ENCODE measurements at regions of chr19 and their contacts with region 1.

Region 1: GRCh38 chr19:19538061-19538784 is at the start of gene CILP2:
- DNase-seq: peak; percentile 37 to 83
- H3K4me3 ChIP-seq: peak within 1 kb of the TSS; percentile 30 to 43 (median 34)
- H3K27ac ChIP-seq: no peak within 1 kb of the TSS
- H3K4me1 ChIP-seq: peaks cover 24 to 47% (median 42%) of the 10 kb centered on the region in 4 donors
- H3K27me3 ChIP-seq: peaks cover 16 to 75% (median 54%) of the 10 kb centered on the region in 3 donors
- CTCF ChIP-seq: no peak
- EP300 ChIP-seq: no peak
- POLR2A ChIP-seq: no peak
- total RNA-seq, gene CILP2: under 0.01 to 1.4 (median 0.73) TPM in 3 of 5 donors, not detected in the others

Region 2: GRCh38 chr19:19643158-19644053 is 105.2 kb after region 1 on chr19 and contains the start of gene GMIP:
- intact Hi-C with region 1: loop called (anchors 5 kb)
- DNase-seq: peak; percentile 88 to 94
- H3K4me3 ChIP-seq: peak within 1 kb of the TSS; percentile 63 to 87 (median 80)
- H3K27ac ChIP-seq: peak within 1 kb of the TSS; percentile 73 to 91 (median 86)
- H3K4me1 ChIP-seq: peaks cover 8 to 24% (median 20%) of the 10 kb centered on the region in 4 donors
- H3K27me3 ChIP-seq: no peaks in the 10 kb centered on the region
- CTCF ChIP-seq: peak in 4 of 7 experiments; percentile 72 to 93 (median 86)
- EP300 ChIP-seq: no peak
- POLR2A ChIP-seq: no peak
- total RNA-seq, gene GMIP: 5.3 to 96.2 (median 35.0) TPM

Region 3: DNA sequence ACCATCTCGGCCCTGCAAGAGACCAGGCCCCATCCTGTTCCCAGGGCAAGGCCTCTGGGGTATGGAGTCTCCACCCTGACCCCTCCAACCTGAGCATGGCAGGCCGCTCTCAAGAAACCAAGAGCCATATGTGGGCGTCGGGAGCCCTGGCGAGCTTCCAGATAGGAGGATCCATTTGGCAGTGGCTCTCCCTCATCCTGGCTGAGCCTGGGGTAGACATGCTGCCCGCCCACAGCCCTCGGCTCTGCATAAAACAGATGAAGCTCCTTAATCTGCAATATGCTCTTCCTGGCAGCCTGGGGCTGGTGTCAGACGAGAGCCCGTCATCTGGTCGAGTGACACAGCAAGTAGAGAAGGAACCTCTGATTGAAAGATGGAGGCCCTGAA is 119.2 kb after region 1 on chr19:
- intact Hi-C with region 1: no loop called
- DNase-seq: peak in 1 of 2 donors; percentile 12
- H3K4me3 ChIP-seq: no peak overlapping the region
- H3K27ac ChIP-seq: no peak overlapping the region
- H3K4me1 ChIP-seq: peaks cover 5 to 24% (median 17%) of the 10 kb centered on the region in 4 donors
- H3K27me3 ChIP-seq: no peaks in the 10 kb centered on the region
- CTCF ChIP-seq: no peak
- EP300 ChIP-seq: no peak
- POLR2A ChIP-seq: no peak

Region 4: GRCh38 chr19:19686580-19686979 is 148.4 kb after region 1 on chr19:
- intact Hi-C with region 1: no loop called
- DNase-seq: no peak
- H3K4me3 ChIP-seq: no peak overlapping the region
- H3K27ac ChIP-seq: no peak overlapping the region
- H3K4me1 ChIP-seq: no peaks in the 10 kb centered on the region
- H3K27me3 ChIP-seq: no peaks in the 10 kb centered on the region
- CTCF ChIP-seq: no peak
- EP300 ChIP-seq: no peak
- POLR2A ChIP-seq: no peak

Measured in stomach (tissue), 19 donors.